HEK293T (cell line): ENCODE measurements at regions of chr5 and their contacts with region 1.

Region 1: GRCh38 chr5:43019614-43020293 is 20.4 kb downstream of the ANXA2R start:
- DNase-seq: no peak

Region 2: GRCh38 chr5:42908509-42909488 is 111.0 kb before region 1 on chr5:
- CTCF ChIA-PET with region 1: interaction called, 11 read pairs
- POLR2A ChIA-PET with region 1: interaction called, 4 read pairs
- DNase-seq: peak; percentile 76

Region 3: GRCh38 chr5:43008369-43009153 is 11.2 kb before region 1 on chr5:
- CTCF ChIA-PET with region 1: interaction called, 12 read pairs
- POLR2A ChIA-PET with region 1: interaction called, 41 read pairs
- DNase-seq: no peak

Region 4: GRCh38 chr5:43066799-43067741 is 47.3 kb after region 1 on chr5:
- CTCF ChIA-PET with region 1: interaction called, 8 read pairs
- POLR2A ChIA-PET with region 1: interaction called, 10 read pairs
- DNase-seq: peak; percentile 41